ENCODE measurements at regions of chrX and their contacts with region 1.

Region 1: GRCh38 chrX:155841232-155841631 is 39.9 kb upstream of the VAMP7 start:
- DNase-seq: no peak
- ATAC-seq: no peak
- H3K4me3 ChIP-seq: no peak overlapping the region
- H3K27ac ChIP-seq: no peak overlapping the region
- H3K4me1 ChIP-seq: no peaks in the 10 kb centered on the region
- H3K27me3 ChIP-seq: no peaks in the 10 kb centered on the region
- CTCF ChIP-seq: no peak
- EP300 ChIP-seq: no peak
- POLR2A ChIP-seq: no peak
- RAD21 ChIP-seq: no peak

Region 2: GRCh38 chrX:155819966-155820491 is 21.2 kb before region 1 on chrX:
- CTCF ChIA-PET with region 1: no interaction called
- POLR2A ChIA-PET with region 1: no interaction called
- in situ Hi-C with region 1: no loop called
- intact Hi-C with region 1: no loop called
- DNase-seq: peak; percentile 49
- ATAC-seq: peak; percentile 75
- H3K4me3 ChIP-seq: no peak overlapping the region
- H3K27ac ChIP-seq: no peak overlapping the region
- H3K4me1 ChIP-seq: no peaks in the 10 kb centered on the region
- H3K27me3 ChIP-seq: no peaks in the 10 kb centered on the region
- CTCF ChIP-seq: peak; percentile 73
- EP300 ChIP-seq: no peak
- POLR2A ChIP-seq: no peak
- RAD21 ChIP-seq: no peak; the same call in 1 of the 2 replicates

Region 3: GRCh38 chrX:155873188-155873587 is 32.0 kb after region 1 on chrX:
- CTCF ChIA-PET with region 1: no interaction called
- POLR2A ChIA-PET with region 1: no interaction called
- in situ Hi-C with region 1: no loop called
- intact Hi-C with region 1: loop called (anchors 2 kb)
- DNase-seq: no peak
- ATAC-seq: no peak
- H3K4me3 ChIP-seq: no peak overlapping the region
- H3K27ac ChIP-seq: no peak overlapping the region
- H3K4me1 ChIP-seq: no peaks in the 10 kb centered on the region
- H3K27me3 ChIP-seq: peaks cover 0 to 4% of the 10 kb centered on the region in 2 experiments; a peak in 1 of 5 replicates
- CTCF ChIP-seq: no peak
- EP300 ChIP-seq: no peak
- POLR2A ChIP-seq: no peak
- RAD21 ChIP-seq: no peak

Measured in HepG2 (cell line).